BJ (cell line): ENCODE measurements at regions of chr17 and their contacts with region 1.

Region 1: GRCh38 chr17:68260051-68260762 is 12.4 kb downstream of the AMZ2 start:
- DNase-seq: no peak
- H3K4me3 ChIP-seq: no peak overlapping the region
- H3K27me3 ChIP-seq: no peaks in the 10 kb centered on the region
- CTCF ChIP-seq: no peak

Region 2: GRCh38 chr17:67725373-67725791 is 534.8 kb before region 1 on chr17:
- CTCF ChIA-PET with region 1: no interaction called
- POLR2A ChIA-PET with region 1: no interaction called
- DNase-seq: no peak
- H3K4me3 ChIP-seq: no peak overlapping the region
- H3K27me3 ChIP-seq: no peaks in the 10 kb centered on the region
- CTCF ChIP-seq: no peak

Region 3: DNA sequence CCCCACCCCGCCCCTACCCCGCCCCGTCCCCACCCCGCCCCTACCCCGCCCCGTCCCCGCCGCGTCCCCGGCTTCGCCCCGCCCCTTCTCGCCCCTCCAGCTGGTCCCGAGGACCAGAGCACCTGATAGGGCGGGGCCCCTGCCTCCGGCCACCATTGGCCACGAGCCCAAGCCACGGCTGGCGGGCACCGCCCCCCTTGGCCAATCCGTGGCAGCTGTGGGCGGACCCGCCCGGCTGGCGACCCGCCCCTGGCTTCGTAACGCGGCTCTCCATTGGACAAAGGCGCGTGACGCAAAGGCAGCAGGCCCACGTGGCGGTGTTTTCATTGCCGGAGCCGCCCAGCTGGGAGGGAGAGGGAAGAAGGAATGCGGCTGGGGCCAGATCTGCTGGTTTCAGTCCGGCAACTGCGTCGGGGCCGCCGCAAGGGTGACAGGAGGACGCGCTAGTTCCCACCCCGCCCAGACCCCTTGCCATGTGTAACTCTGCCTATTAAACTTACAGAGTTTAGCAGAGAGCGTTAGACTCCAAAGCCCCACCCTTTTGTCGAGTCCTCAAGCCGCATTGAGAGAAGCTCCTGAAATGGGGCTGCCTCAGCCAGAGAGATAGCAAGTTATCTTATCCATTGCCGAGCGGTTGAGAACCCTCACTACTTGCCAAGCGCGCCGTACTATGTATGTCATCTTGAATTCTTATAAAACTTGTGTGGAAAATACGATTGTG is 197.5 kb after region 1 on chr17:
- CTCF ChIA-PET with region 1: interaction called, 10 read pairs
- POLR2A ChIA-PET with region 1: no interaction called
- DNase-seq: peak; percentile 84
- H3K4me3 ChIP-seq: peak overlapping the region; percentile 55
- H3K27me3 ChIP-seq: 0 out of 2 replicates have a peak, but pooled peaks cover 2% of the 10 kb centered on the region
- CTCF ChIP-seq: 0 out of 2 replicates have a peak, but pooled peaks have one; percentile 5

Region 4: GRCh38 chr17:68468334-68468733 is 208.1 kb after region 1 on chr17:
- CTCF ChIA-PET with region 1: interaction called, 15 read pairs
- POLR2A ChIA-PET with region 1: no interaction called
- DNase-seq: no peak
- H3K4me3 ChIP-seq: no peak overlapping the region
- H3K27me3 ChIP-seq: peaks cover 6% of the 10 kb centered on the region; the same call in 1 of the 2 replicates
- CTCF ChIP-seq: no peak